ENCODE measurements at regions of chr5 and their contacts with region 1.

Region 1: DNA sequence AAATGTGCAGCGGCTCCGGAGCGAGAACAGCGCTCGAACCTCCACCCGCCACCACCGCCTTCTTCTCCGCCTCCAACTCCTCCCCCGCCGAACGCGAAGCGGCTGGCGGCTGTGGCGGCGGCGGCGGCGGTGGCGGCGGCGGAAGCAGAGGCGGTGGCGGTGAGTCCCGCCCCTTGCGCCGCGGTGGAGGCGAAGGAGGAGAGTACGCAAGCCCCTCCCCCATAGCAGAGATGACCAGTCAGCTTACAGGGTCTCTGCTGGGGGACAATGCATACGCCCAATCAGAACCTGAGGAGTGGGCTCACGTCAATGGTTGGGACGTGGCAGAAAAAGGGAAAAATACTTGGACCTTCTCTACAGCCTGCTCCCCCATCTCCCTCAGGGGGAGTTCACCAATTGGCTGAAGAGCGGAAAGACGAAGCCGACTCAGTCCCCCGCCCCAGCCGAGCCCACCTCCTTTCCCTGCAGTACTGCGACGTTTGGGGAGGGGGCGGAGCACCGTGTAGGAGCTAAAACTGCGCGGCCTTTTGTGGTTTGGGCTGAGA is at the start of gene PJA2:
- DNase-seq: peak; percentile 99
- total RNA-seq, gene PJA2: 98.2 TPM

Region 2: GRCh38 chr5:108381954-108382783 is 1027.7 kb before region 1 on chr5 and contains the start of gene FBXL17:
- intact Hi-C with region 1: loop called (anchors 5 kb)
- DNase-seq: peak; percentile 98
- total RNA-seq, gene FBXL17: 27.3 TPM

Region 3: DNA sequence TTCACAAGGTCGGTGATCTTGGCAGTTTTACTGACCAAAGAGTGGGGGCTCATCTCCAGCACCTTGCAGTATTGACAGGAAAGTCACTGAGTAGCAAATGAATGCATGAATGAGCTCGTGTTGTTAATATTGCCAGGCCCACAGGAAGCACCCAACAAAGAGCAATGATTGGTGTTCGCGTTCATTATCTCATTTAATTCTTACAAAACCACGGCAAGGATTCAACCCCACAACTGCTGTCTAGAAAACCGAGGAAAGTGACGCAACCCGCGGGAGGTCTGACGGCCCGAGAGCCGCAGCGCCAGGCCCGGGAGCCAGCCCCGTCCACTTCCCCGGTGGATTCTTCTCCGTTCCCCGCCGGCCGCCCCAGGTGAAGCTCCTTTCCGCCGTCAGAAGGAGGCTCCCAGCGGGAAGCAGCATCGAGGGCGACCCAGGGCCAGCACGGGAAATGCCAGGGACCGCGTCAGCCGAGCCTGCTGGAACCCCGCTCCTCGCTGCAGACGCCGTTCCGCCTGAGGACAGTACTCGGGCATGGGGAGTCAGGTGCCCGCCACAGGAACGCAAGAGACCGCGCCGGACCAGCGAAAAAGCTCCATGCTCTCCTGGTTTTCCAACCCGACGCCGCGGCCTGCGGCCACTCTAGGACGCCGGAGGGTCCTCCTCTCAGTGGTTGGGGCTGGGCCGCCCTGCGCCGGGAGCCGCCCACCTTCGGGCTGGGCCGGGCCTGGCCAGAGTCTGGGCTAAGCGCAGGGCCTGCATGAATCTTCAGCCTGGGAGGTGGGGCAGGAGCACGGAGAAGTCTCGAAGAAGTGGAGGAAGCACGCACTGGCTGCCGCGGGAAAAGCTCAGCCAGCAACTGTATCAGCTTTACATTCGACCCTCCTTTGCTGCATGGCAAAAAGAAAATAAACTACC is 682.0 kb before region 1 on chr5:
- intact Hi-C with region 1: loop called (anchors 5 kb)
- DNase-seq: peak; percentile 95

Region 4: GRCh38 chr5:108748401-108749127 is 661.4 kb before region 1 on chr5:
- intact Hi-C with region 1: loop called (anchors 1 kb)
- DNase-seq: peak; percentile 100

Region 5: DNA sequence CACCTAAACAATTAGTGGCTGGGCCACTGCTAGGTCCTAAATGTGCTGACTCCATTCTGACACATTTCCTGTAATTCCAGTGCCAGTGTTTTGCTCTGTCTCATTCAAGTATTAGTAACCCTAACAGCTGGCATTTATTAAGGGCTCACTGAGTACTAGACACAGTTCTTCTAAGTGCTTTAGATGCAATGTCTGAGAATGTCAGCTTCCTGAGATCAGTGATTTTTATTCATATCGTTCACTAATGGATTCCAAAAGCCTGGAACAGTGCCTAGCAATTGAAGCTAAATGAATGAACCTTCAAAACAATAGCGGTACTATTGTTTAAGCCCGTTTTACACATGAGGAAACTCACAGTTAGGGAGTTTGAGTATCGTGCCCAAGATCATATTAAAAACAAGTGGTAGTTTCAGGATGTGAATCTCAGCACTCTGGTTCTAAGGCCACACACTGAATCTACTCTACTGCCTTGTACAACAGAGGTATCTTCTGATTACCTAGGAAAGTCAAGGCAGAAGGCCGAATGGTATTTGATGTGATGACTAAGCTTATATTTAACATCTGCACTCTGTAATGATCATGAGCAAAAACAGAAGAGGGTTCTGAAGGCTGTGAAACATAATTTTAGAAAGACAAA is 304.2 kb before region 1 on chr5:
- intact Hi-C with region 1: loop called (anchors 2 kb)
- DNase-seq: no peak

Region 6: DNA sequence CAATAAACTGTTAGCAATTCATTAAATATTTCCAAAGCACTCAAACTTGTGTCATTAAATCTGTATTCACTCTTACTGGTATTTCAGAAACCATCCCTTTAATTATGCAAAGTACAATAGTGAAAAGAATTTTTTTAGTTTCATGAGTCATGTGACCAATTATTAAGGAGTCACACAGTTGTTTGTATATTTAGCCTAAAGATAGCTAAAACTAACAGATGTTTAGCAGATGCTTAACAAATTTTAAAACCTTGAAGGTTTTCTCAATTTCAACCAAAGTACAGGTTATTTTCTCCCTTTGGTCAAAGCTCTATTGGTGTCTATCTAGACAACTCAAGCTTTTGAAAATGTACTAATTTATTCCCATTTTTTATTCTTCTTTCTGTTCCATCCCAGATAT is 44.3 kb before region 1 on chr5:
- intact Hi-C with region 1: no loop called
- DNase-seq: no peak

Region 7: GRCh38 chr5:109688971-109689739 is 279.2 kb after region 1 on chr5:
- intact Hi-C with region 1: loop called (anchors 2 kb)
- DNase-seq: peak; percentile 94